Activated B cell treated with CpG ODN at 0.5 μM for 24 hours (primary cell): ENCODE measurements at regions of chr4 and their contacts with region 1.

Region 1: DNA sequence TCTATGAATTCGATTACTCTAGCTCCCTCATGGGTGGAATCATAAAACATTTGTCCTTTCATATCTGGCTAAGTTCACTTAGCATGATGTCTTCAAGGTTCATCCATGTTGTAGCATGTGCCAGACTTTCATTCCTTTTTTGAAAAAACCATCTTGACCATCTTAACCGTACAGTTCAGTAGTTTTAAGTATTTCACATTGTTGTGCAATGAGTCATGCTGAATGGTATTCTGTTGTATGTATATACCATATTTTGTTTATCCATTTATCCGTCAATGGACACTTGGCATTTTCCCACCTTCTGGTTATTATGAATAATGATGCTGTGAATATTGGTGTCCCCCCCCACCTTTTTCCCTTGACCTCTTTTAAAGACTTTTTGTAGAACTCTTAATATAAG is 72.4 kb upstream of the TLR2 start:
- DNase-seq: no peak
- ATAC-seq: no peak
- H3K4me3 Mint-ChIP-seq: no peak overlapping the region
- H3K27ac Mint-ChIP-seq: no peak overlapping the region
- H3K4me1 Mint-ChIP-seq: peaks cover 22% of the 10 kb centered on the region
- H3K27me3 Mint-ChIP-seq: no peaks in the 10 kb centered on the region
- CTCF ChIP-seq: no peak

Region 2: DNA sequence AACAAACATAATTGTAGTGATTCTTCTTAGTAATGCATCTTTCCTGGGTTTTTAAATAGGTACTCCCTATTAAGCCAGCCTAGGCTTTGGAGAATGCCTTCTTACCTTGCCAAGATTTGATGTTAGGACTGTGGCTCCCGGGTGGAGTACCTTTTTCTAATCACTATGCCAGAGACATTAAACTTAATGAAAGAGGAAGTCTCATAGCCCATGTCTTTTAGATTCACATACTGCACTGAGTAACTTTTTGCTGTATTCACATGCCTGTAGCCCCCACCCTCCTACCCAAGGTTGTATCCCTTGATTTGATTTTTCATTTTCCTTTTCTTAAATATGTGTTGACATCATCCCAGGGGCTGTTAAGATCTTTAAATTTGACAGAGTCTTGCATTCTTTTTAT is 31.8 kb before region 1 on chr4:
- CTCF ChIA-PET with region 1: interaction called, 3 read pairs
- POLR2A ChIA-PET with region 1: no interaction called
- intact Hi-C with region 1: loop called (anchors 5 kb)
- DNase-seq: no peak
- ATAC-seq: peak; percentile 73
- H3K4me3 Mint-ChIP-seq: peak overlapping the region; percentile 36
- H3K27ac Mint-ChIP-seq: peak overlapping the region; percentile 59
- H3K4me1 Mint-ChIP-seq: peaks cover 71% of the 10 kb centered on the region
- H3K27me3 Mint-ChIP-seq: no peaks in the 10 kb centered on the region
- CTCF ChIP-seq: no peak

Region 3: GRCh38 chr4:153799694-153800074 is 188.0 kb after region 1 on chr4:
- CTCF ChIA-PET with region 1: no interaction called
- POLR2A ChIA-PET with region 1: no interaction called
- intact Hi-C with region 1: no loop called
- DNase-seq: no peak
- ATAC-seq: no peak
- H3K4me3 Mint-ChIP-seq: no peak overlapping the region
- H3K27ac Mint-ChIP-seq: no peak overlapping the region
- H3K4me1 Mint-ChIP-seq: no peaks in the 10 kb centered on the region
- H3K27me3 Mint-ChIP-seq: peaks cover 42% of the 10 kb centered on the region
- CTCF ChIP-seq: no peak

Region 4: GRCh38 chr4:154137320-154137905 is 525.7 kb after region 1 on chr4:
- CTCF ChIA-PET with region 1: no interaction called
- POLR2A ChIA-PET with region 1: no interaction called
- intact Hi-C with region 1: no loop called
- DNase-seq: no peak
- ATAC-seq: no peak
- H3K4me3 Mint-ChIP-seq: no peak overlapping the region
- H3K27ac Mint-ChIP-seq: no peak overlapping the region
- H3K4me1 Mint-ChIP-seq: no peaks in the 10 kb centered on the region
- H3K27me3 Mint-ChIP-seq: no peaks in the 10 kb centered on the region
- CTCF ChIP-seq: no peak